PC-3 (cell line): ENCODE measurements at regions of chr4 and their contacts with region 1.

Region 1: DNA sequence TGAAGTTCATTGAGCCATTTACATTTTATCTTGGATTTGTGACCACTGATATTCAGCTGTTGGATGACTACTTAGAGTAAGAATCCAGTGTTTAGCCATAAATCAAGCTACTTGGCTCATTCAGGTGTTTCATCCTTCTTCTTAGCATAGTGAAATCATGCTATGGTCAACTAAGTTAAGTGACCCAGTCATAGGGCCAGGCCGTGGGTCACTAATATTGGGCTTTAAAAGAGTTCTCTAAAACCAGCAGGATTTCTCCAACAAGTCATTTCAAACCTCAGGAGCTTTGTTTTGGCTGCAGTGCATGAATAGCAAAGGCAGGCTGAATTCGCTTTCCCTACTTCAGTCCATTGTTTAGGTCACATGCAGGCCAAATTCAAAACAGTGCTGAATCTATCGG is 181.0 kb downstream of the MAML3 start:
- DNase-seq: no peak
- ATAC-seq: no peak; the same call in 1 of the 2 replicates
- H3K4me3 ChIP-seq: no peak overlapping the region
- H3K27ac ChIP-seq: no peak overlapping the region
- H3K4me1 ChIP-seq: 0 out of 2 replicates have a peak, but pooled peaks cover 6% of the 10 kb centered on the region
- H3K27me3 ChIP-seq: no peaks in the 10 kb centered on the region
- CTCF ChIP-seq: no peak

Region 2: GRCh38 chr4:140122891-140123290 is 149.9 kb after region 1 on chr4:
- CTCF ChIA-PET with region 1: no interaction called
- POLR2A ChIA-PET with region 1: interaction called, 18 read pairs
- intact Hi-C with region 1: no loop called
- DNase-seq: no peak
- ATAC-seq: no peak
- H3K4me3 ChIP-seq: no peak overlapping the region
- H3K27ac ChIP-seq: no peak overlapping the region
- H3K4me1 ChIP-seq: peaks cover 3% of the 10 kb centered on the region; the same call in 1 of the 2 replicates
- H3K27me3 ChIP-seq: no peaks in the 10 kb centered on the region
- CTCF ChIP-seq: no peak